ENCODE measurements at regions of chr11 and their contacts with region 1.

Region 1: GRCh38 chr11:12827929-12828812 is 153.9 kb downstream of the TEAD1 start:
- DNase-seq: peak; percentile 66
- ATAC-seq: peak; percentile 78
- H3K4me3 ChIP-seq: peak overlapping the region; percentile 47 to 72 (median 67)
- H3K27ac ChIP-seq: peak overlapping the region; percentile 87
- H3K4me1 ChIP-seq: peaks cover 78% of the 10 kb centered on the region
- H3K27me3 ChIP-seq: no peaks in the 10 kb centered on the region
- CTCF ChIP-seq: no peak
- EP300 ChIP-seq: no peak; a peak in 1 of 4 replicates
- POLR2A ChIP-seq: peak; percentile 45 to 52
- RAD21 ChIP-seq: no peak

Region 2: DNA sequence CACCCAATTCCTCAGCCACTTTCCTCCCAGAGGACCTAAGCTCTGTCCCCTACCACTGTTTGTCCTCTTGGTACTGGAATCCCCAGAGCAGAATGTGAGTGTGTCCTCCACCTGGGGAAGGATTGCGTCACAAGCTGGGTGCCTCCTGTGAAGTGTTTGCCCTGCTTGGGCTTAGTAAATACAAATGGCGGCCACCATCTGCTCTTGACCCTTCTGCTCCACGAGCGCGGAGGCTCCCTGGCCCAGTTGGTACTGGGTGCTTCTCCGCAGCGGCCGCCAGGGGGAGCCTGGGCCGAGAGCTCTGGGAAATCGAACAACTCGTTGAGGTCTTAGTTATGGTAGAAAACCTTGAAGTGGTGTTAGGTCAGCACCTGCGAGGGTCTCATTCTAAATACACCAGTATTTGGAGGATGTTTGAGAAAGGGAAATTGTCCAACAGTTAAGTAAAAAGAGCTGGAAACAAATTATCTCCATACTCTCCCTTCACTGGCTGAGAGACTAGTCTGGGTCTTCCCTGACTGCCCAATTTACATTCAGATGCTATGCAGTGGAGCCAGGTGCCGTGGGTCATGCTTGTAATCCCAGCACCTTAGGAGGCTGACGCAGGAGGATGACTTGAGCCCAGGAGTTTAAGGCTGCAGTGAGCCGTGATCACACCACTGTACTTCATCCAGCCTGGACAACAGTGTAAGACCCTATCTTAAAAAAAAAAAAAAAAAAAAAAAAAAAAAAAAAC is 228.6 kb before region 1 on chr11:
- CTCF ChIA-PET with region 1: no interaction called
- POLR2A ChIA-PET with region 1: no interaction called
- in situ Hi-C with region 1: no loop called
- intact Hi-C with region 1: loop called (anchors 10 kb)
- DNase-seq: peak; percentile 91
- ATAC-seq: peak; percentile 99
- H3K4me3 ChIP-seq: no peak overlapping the region
- H3K27ac ChIP-seq: no peak overlapping the region
- H3K4me1 ChIP-seq: peaks cover 26% of the 10 kb centered on the region
- H3K27me3 ChIP-seq: no peaks in the 10 kb centered on the region
- CTCF ChIP-seq: peak; percentile 96
- EP300 ChIP-seq: peak in 1 of 2 experiments; percentile 55; a peak in 2 of 4 replicates
- POLR2A ChIP-seq: no peak
- RAD21 ChIP-seq: peak; percentile 89

Region 3: GRCh38 chr11:12693479-12694181 is 134.5 kb before region 1 on chr11:
- CTCF ChIA-PET with region 1: no interaction called
- POLR2A ChIA-PET with region 1: interaction called, 11 read pairs
- in situ Hi-C with region 1: no loop called
- intact Hi-C with region 1: no loop called
- DNase-seq: peak; percentile 48
- ATAC-seq: peak; percentile 47
- H3K4me3 ChIP-seq: peak overlapping the region; percentile 2 to 55 (median 6); a peak in 3 of 6 replicates
- H3K27ac ChIP-seq: peak overlapping the region; percentile 94
- H3K4me1 ChIP-seq: peaks cover 78% of the 10 kb centered on the region
- H3K27me3 ChIP-seq: no peaks in the 10 kb centered on the region
- CTCF ChIP-seq: no peak
- EP300 ChIP-seq: no peak
- POLR2A ChIP-seq: no peak
- RAD21 ChIP-seq: no peak

Region 4: GRCh38 chr11:12769834-12770345 is 58.3 kb before region 1 on chr11:
- CTCF ChIA-PET with region 1: no interaction called
- POLR2A ChIA-PET with region 1: interaction called, 4 read pairs
- in situ Hi-C with region 1: no loop called
- intact Hi-C with region 1: loop called (anchors 10 kb)
- DNase-seq: no peak
- ATAC-seq: no peak
- H3K4me3 ChIP-seq: no peak overlapping the region
- H3K27ac ChIP-seq: no peak overlapping the region
- H3K4me1 ChIP-seq: peaks cover 26% of the 10 kb centered on the region
- H3K27me3 ChIP-seq: no peaks in the 10 kb centered on the region
- CTCF ChIP-seq: no peak
- EP300 ChIP-seq: no peak
- POLR2A ChIP-seq: no peak
- RAD21 ChIP-seq: no peak

Region 5: GRCh38 chr11:12802418-12803085 is 25.6 kb before region 1 on chr11:
- CTCF ChIA-PET with region 1: no interaction called
- POLR2A ChIA-PET with region 1: interaction called, 11 read pairs
- in situ Hi-C with region 1: no loop called
- intact Hi-C with region 1: loop called (anchors 2 kb)
- DNase-seq: peak; percentile 99
- ATAC-seq: peak; percentile 94
- H3K4me3 ChIP-seq: peak overlapping the region in 1 of 3 experiments; percentile 25; a peak in 2 of 6 replicates
- H3K27ac ChIP-seq: peak overlapping the region; percentile 96
- H3K4me1 ChIP-seq: peaks cover 94% of the 10 kb centered on the region
- H3K27me3 ChIP-seq: no peaks in the 10 kb centered on the region
- CTCF ChIP-seq: no peak
- EP300 ChIP-seq: peak; percentile 95 to 98
- POLR2A ChIP-seq: peak in 1 of 2 experiments; percentile 57; a peak in 1 of 4 replicates
- RAD21 ChIP-seq: peak; percentile 13; the same call in 1 of the 2 replicates

Region 6: GRCh38 chr11:12845739-12846358 is 17.7 kb after region 1 on chr11:
- CTCF ChIA-PET with region 1: no interaction called
- POLR2A ChIA-PET with region 1: interaction called, 70 read pairs
- in situ Hi-C with region 1: no loop called
- intact Hi-C with region 1: loop called (anchors 1 kb)
- DNase-seq: peak; percentile 98
- ATAC-seq: peak; percentile 97
- H3K4me3 ChIP-seq: peak overlapping the region; percentile 38 to 66 (median 51)
- H3K27ac ChIP-seq: peak overlapping the region; percentile 99
- H3K4me1 ChIP-seq: peaks cover 68% of the 10 kb centered on the region
- H3K27me3 ChIP-seq: no peaks in the 10 kb centered on the region
- CTCF ChIP-seq: no peak
- EP300 ChIP-seq: peak; percentile 85 to 90
- POLR2A ChIP-seq: peak; percentile 59 to 82; a peak in 3 of 4 replicates
- RAD21 ChIP-seq: no peak